Prostate gland (tissue), 2 donors: ENCODE measurements at regions of chr2 and their contacts with region 1.

Region 1: GRCh38 chr2:165953655-165954606 is at the start of gene TTC21B:
- DNase-seq: peak; percentile 94
- H3K4me3 ChIP-seq: peak within 1 kb of the TSS; percentile 73 to 79
- H3K27ac ChIP-seq: peak within 1 kb of the TSS; percentile 87 to 90
- H3K4me1 ChIP-seq: no peaks in the 10 kb centered on the region
- H3K27me3 ChIP-seq: no peaks in the 10 kb centered on the region
- CTCF ChIP-seq: peak; percentile 74 to 90 (median 81)
- POLR2A ChIP-seq: peak; percentile 61
- total RNA-seq, gene TTC21B: 28.0 to 49.6 TPM

Region 2: GRCh38 chr2:165776013-165776412 is 177.9 kb before region 1 on chr2:
- intact Hi-C with region 1: no loop called
- DNase-seq: peak; percentile 20
- H3K4me3 ChIP-seq: no peak overlapping the region
- H3K27ac ChIP-seq: no peak overlapping the region
- H3K4me1 ChIP-seq: peaks cover 7% of the 10 kb centered on the region
- H3K27me3 ChIP-seq: no peaks in the 10 kb centered on the region
- CTCF ChIP-seq: no peak
- POLR2A ChIP-seq: no peak

Region 3: GRCh38 chr2:166127217-166128155 is 173.6 kb after region 1 on chr2 and contains the start of gene SCN1A:
- intact Hi-C with region 1: loop called (anchors 5 kb)
- DNase-seq: no peak
- H3K4me3 ChIP-seq: no peak within 1 kb of the TSS
- H3K27ac ChIP-seq: no peak within 1 kb of the TSS
- H3K4me1 ChIP-seq: no peaks in the 10 kb centered on the region
- H3K27me3 ChIP-seq: peaks cover 4% of the 10 kb centered on the region
- CTCF ChIP-seq: peak; percentile 34 to 49 (median 42)
- POLR2A ChIP-seq: no peak
- total RNA-seq, gene SCN1A: 0.23 TPM in 1 of 2 donors, not detected in the other